Spleen (tissue), 13 donors: ENCODE measurements at regions of chr1 and their contacts with region 1.

Region 1: DNA sequence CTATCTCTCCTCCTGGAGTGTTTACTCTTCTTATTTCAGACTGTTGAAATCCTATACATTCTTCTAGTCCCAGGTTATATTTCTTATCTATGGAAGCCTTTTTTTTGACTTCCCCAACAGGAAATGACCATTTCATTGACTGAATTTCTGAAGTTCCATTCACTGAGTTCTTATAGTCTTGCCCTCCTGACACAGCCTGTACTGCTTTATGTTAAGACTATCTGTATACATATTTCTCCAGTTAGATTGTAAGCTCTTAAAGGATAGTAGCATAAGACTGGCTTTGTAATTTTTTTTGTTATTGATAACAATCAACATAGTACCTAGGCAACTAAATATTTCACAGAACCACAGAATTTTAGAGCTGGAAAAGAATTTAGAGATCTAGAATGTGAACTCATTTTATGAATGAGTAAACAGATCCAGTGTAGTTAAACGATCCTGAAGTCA is 14.9 kb upstream of the MACF1 start:
- DNase-seq: no peak
- H3K4me3 ChIP-seq: no peak overlapping the region
- H3K27ac ChIP-seq: peak overlapping the region in 1 of 8 donors; percentile 17
- H3K4me1 ChIP-seq: peaks cover 31 to 70% (median 48%) of the 10 kb centered on the region in 6 donors
- H3K27me3 ChIP-seq: no peaks in the 10 kb centered on the region
- CTCF ChIP-seq: no peak
- POLR2A ChIP-seq: no peak

Region 2: GRCh38 chr1:39258146-39258924 is 68.7 kb after region 1 on chr1:
- intact Hi-C with region 1: loop called (anchors 5 kb)
- DNase-seq: no peak
- H3K4me3 ChIP-seq: no peak overlapping the region
- H3K27ac ChIP-seq: peak overlapping the region in 6 of 8 donors; percentile 5 to 28 (median 19)
- H3K4me1 ChIP-seq: peaks cover 9 to 65% (median 36%) of the 10 kb centered on the region in 6 donors
- H3K27me3 ChIP-seq: no peaks in the 10 kb centered on the region
- CTCF ChIP-seq: peak; percentile 51 to 89 (median 83)
- POLR2A ChIP-seq: no peak